HEK293 (cell line): ENCODE measurements at regions of chrX and their contacts with region 1.

Region 1: DNA sequence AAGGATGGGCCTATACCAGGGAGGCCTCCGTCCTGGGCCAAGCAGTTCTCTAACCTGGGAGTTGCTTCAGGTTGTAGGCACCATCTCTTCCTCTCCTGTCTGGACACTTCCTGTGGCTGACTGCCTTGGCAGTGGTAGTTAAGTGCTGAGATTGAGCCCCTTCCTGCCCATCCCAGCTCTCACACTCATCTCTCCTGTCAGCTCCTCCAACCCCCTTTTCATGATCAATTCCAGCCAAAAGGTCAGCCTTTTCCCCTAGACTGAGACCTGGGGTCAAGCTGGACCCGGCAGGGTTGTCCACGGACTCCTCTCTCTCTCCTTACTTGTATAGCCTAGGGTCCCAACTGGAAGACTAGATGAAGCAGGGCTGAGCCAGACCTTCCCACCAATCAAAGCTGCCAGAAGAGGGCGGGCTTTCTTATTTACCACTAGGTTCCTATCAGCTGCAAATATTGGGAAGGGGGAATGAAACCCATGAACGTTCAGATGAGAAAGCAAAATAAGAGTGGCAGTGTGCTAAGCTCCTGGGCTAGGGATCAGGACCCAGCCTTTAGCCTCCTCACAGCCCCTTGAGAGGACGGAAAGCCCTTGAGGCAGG is 34.5 kb downstream of the KDM5C start:
- H3K4me3 ChIP-seq: no peak overlapping the region
- H3K27ac ChIP-seq: no peak overlapping the region
- H3K4me1 ChIP-seq: no peaks in the 10 kb centered on the region
- CTCF ChIP-seq: no peak

Region 2: GRCh38 chrX:52118262-52118661 is 1072.2 kb before region 1 on chrX:
- CTCF ChIA-PET with region 1: no interaction called
- POLR2A ChIA-PET with region 1: no interaction called
- H3K4me3 ChIP-seq: no peak overlapping the region
- H3K27ac ChIP-seq: no peak overlapping the region
- H3K4me1 ChIP-seq: no peaks in the 10 kb centered on the region
- CTCF ChIP-seq: no peak

Region 3: GRCh38 chrX:53211391-53211978 is 21.0 kb after region 1 on chrX:
- CTCF ChIA-PET with region 1: interaction called, 11 read pairs
- POLR2A ChIA-PET with region 1: interaction called, 3 read pairs
- H3K4me3 ChIP-seq: no peak overlapping the region
- H3K27ac ChIP-seq: no peak overlapping the region
- H3K4me1 ChIP-seq: no peaks in the 10 kb centered on the region
- CTCF ChIP-seq: no peak

Region 4: GRCh38 chrX:53224860-53225797 is 34.7 kb after region 1 on chrX and contains the start of gene KDM5C:
- CTCF ChIA-PET with region 1: interaction called, 10 read pairs
- POLR2A ChIA-PET with region 1: interaction called, 12 read pairs
- H3K4me3 ChIP-seq: peak within 1 kb of the TSS; percentile 90
- H3K27ac ChIP-seq: peak within 1 kb of the TSS; percentile 96
- H3K4me1 ChIP-seq: peaks cover 19% of the 10 kb centered on the region
- CTCF ChIP-seq: peak; percentile 55; the same call in 1 of the 2 replicates